Heart right ventricle (tissue), 16 donors: ENCODE measurements at regions of chr11 and their contacts with region 1.

Region 1: GRCh38 chr11:3854977-3855807 is at the start of gene STIM1:
- DNase-seq: peak; percentile 95 to 96
- ATAC-seq: peak; percentile 90 to 96 (median 94)
- H3K4me3 ChIP-seq: peak within 1 kb of the TSS; percentile 83 to 98 (median 94)
- H3K27ac ChIP-seq: peak within 1 kb of the TSS; percentile 95 to 99 (median 98)
- H3K4me1 ChIP-seq: peaks cover 4 to 57% (median 45%) of the 10 kb centered on the region in 9 donors
- H3K27me3 ChIP-seq: peaks cover 0 to 4% (median 0%) of the 10 kb centered on the region in 7 donors
- CTCF ChIP-seq: peak; percentile 94 to 99 (median 98)
- total RNA-seq, gene STIM1: 25.8 to 55.7 (median 39.9) TPM

Region 2: DNA sequence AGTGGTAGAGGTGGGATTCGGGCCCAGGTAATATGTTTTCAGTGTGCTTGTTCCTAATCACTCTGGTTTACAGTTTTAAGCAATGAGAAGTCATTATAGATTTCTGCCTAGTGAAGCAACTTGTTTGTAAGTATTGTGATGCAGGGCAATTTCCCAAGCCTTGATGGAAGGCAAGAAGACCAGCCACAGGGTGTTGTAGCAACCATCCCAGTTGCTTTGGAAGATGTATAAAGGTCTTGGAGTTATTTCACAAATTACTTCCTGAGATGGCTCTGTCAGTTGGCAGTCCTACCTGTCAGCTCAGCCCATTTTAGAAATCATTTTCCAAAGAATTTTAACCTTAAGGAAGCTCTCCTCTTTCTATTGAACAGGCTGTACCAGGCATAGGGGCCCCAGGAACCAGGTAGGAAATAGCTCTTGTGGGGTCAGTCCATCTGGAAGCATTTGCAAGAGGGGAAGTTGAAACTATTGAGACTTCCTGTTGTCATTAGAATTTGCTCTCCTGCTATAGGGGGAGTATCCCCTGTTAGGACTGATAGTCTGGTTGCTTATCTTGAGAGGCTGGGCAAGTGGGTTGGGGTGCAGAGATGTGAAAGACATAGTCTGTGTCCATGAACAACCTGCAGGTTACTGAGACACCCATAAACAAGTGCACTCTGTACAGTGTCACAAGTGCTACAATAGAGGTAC is 48.2 kb after region 1 on chr11:
- intact Hi-C with region 1: loop called in 1 of 10 experiments (anchors 5 kb)
- DNase-seq: no peak
- ATAC-seq: peak in 2 of 8 donors; percentile 28 to 30
- H3K4me3 ChIP-seq: no peak overlapping the region
- H3K27ac ChIP-seq: no peak overlapping the region
- H3K4me1 ChIP-seq: peaks cover 3 to 65% (median 40%) of the 10 kb centered on the region in 9 donors
- H3K27me3 ChIP-seq: no peaks in the 10 kb centered on the region
- CTCF ChIP-seq: no peak

Region 3: GRCh38 chr11:3947061-3947460 is 91.9 kb after region 1 on chr11:
- intact Hi-C with region 1: loop called in 9 of 10 experiments (anchors 5 to 10 kb)
- DNase-seq: peak in 1 of 2 donors; percentile 74
- ATAC-seq: peak; percentile 86 to 92 (median 90)
- H3K4me3 ChIP-seq: no peak overlapping the region
- H3K27ac ChIP-seq: peak overlapping the region; percentile 71 to 87 (median 77)
- H3K4me1 ChIP-seq: peaks cover 16 to 97% (median 81%) of the 10 kb centered on the region in 9 donors
- H3K27me3 ChIP-seq: no peaks in the 10 kb centered on the region
- CTCF ChIP-seq: no peak

Region 4: DNA sequence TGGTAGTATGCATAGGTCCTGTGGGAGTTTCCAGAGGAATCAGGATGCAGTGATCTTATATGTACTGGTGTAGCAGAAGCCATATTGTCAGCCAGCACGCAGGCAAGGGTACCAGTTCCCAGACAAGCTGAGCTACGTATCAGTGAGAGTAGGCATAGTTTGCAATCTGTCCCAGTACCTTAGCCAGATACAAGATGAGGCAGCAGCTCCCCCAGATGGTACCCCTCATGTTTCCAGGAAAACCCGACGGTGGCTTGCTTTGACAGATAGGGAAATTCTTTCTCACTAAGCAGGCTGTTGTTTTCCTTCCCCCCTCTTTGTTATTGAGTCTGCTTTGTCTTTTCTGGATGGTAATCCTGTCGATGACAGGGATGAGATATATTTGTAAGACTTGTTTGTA is 129.7 kb after region 1 on chr11:
- intact Hi-C with region 1: loop called in 2 of 10 experiments (anchors 10 kb)
- DNase-seq: no peak
- ATAC-seq: peak in 5 of 8 donors; percentile 29 to 55 (median 36)
- H3K4me3 ChIP-seq: no peak overlapping the region
- H3K27ac ChIP-seq: no peak overlapping the region
- H3K4me1 ChIP-seq: peaks cover 4 to 65% (median 30%) of the 10 kb centered on the region in 9 donors
- H3K27me3 ChIP-seq: no peaks in the 10 kb centered on the region
- CTCF ChIP-seq: peak in 2 of 9 donors; percentile 26 to 43

Region 5: DNA sequence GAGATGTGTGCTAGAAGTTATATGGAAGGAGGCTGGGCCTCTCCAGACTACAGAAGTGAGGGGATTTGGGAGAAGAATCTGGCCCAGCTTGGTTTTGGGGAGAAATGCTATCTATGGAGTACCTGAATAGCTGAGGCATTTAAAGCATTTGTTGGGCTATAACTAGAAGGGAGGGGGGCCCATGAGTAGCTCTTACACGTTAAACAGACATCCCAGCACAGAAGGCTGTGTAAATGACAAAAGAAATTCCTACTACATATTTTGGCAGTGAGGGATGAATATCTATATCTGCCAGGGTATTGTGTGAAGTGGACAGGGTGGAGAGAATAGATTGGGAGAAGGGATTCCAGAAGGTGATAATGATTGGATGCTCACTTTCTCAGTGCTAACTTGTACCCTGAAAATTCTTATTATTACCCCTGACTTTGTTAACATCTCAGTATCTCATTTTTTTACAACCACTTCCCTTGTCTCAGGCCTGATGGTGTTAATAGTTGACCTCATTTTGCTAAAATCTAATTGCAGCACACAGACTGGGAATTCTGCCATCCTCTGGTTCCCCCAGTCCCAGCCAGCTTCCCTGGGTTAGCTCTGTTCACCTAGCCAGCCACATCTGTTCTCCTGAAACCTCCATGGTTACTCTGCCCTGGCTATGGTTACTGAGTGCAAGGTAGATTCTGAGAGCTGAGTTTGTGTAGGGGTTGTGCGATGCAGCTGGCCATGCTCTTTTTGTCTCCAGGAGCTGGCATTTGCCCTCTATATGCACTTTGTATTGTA is 210.6 kb after region 1 on chr11:
- intact Hi-C with region 1: loop called in 2 of 10 experiments (anchors 2 kb)
- DNase-seq: peak in 1 of 2 donors; percentile 48
- ATAC-seq: peak; percentile 69 to 90 (median 83)
- H3K4me3 ChIP-seq: no peak overlapping the region
- H3K27ac ChIP-seq: peak overlapping the region in 4 of 10 donors; percentile 15 to 48 (median 30)
- H3K4me1 ChIP-seq: peaks cover 3 to 46% (median 35%) of the 10 kb centered on the region in 9 donors
- H3K27me3 ChIP-seq: no peaks in the 10 kb centered on the region
- CTCF ChIP-seq: peak in 3 of 9 donors; percentile 10 to 21 (median 17)

Region 6: GRCh38 chr11:4072668-4073285 is 217.6 kb after region 1 on chr11:
- intact Hi-C with region 1: loop called in 9 of 10 experiments (anchors 1 to 2 kb)
- DNase-seq: peak in 1 of 2 donors; percentile 69
- ATAC-seq: peak; percentile 68 to 94 (median 88)
- H3K4me3 ChIP-seq: no peak overlapping the region
- H3K27ac ChIP-seq: peak overlapping the region in 2 of 10 donors; percentile 19 to 41
- H3K4me1 ChIP-seq: peaks cover 0 to 27% (median 12%) of the 10 kb centered on the region in 9 donors
- H3K27me3 ChIP-seq: no peaks in the 10 kb centered on the region
- CTCF ChIP-seq: peak; percentile 69 to 91 (median 87)